ENCODE measurements at regions of chr16 and their contacts with region 1.

Region 1: DNA sequence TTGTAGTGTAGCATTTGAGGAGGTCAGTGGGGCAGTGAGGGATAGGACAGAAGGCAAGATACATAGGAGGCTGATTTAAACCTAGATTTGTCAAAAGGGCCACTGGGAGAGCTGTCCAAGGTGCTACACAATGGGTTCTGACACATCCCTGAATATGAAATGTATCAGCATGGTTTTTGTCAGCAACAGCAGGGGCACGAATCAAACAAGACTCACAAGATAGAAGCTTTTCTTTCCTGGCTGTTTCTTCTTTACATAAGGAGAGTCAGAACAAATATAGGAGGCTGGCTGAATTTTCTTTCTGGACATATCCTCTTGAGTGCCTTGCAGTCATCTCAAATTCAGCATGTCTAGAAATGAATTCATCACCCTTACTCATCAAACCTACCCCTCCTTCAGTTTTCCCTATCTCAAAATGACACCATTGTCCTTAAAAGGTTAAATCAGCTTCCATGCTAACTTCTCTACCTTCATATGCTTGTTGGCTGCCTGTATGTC is 130.5 kb downstream of the NPIPB5 start:
- DNase-seq: peak; percentile 60
- H3K4me3 ChIP-seq: no peak overlapping the region
- H3K27ac ChIP-seq: no peak overlapping the region
- H3K4me1 ChIP-seq: peaks cover 13% of the 10 kb centered on the region
- H3K27me3 ChIP-seq: peaks cover under 1% of the 10 kb centered on the region
- CTCF ChIP-seq: no peak

Region 2: GRCh38 chr16:22743401-22743800 is 102.2 kb after region 1 on chr16:
- CTCF ChIA-PET with region 1: no interaction called
- dilution Hi-C with region 1: loop called (anchors 5 kb)
- in situ Hi-C with region 1: no loop called
- intact Hi-C with region 1: no loop called
- DNase-seq: peak; percentile 4
- H3K4me3 ChIP-seq: no peak overlapping the region
- H3K27ac ChIP-seq: no peak overlapping the region
- H3K4me1 ChIP-seq: no peaks in the 10 kb centered on the region
- H3K27me3 ChIP-seq: no peaks in the 10 kb centered on the region
- CTCF ChIP-seq: no peak

Region 3: GRCh38 chr16:23742766-23743165 is 1101.6 kb after region 1 on chr16:
- CTCF ChIA-PET with region 1: no interaction called
- dilution Hi-C with region 1: no loop called
- in situ Hi-C with region 1: no loop called
- intact Hi-C with region 1: no loop called
- DNase-seq: no peak
- H3K4me3 ChIP-seq: no peak overlapping the region
- H3K27ac ChIP-seq: no peak overlapping the region
- H3K4me1 ChIP-seq: no peaks in the 10 kb centered on the region
- H3K27me3 ChIP-seq: peaks cover 6% of the 10 kb centered on the region
- CTCF ChIP-seq: peak in 1 of 2 donors; percentile 33